ENCODE measurements at regions of chr1 and their contacts with region 1.

Region 1: DNA sequence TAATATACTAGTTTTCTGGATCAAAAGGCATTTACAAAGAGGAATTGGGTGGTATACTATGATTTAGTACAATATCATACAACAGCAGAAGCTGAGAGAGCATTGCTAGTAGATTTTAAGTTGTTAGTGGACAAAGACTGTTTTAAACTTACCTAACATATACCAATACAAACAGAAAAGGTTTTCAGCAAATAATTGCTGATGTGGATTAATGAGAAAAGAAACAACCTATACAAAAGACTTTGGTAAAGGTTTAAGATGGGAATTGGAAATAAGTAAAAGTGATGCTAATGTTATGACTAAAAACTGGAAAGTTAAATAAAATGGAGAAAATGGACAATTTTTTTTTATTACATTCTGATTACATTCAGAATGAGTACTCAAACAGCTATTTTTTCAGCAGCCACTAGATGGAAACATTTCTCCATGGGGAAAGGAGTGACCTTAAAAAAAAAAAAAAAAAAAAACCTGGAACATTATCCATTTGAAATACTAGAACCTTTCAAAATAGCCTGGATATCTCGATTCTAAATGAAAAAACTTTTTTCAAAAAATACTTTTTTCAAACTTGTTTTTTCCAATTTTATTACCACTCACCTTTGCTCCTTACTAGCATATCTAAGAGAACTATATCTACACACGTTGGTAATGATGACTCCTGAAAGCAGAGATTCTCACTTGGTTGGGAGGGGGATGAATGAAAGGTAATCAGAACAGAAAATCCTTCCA is 55.4 kb downstream of the EPRS1 start:
- DNase-seq: no peak
- H3K4me3 Mint-ChIP-seq: no peak overlapping the region
- H3K27ac Mint-ChIP-seq: no peak overlapping the region
- H3K4me1 Mint-ChIP-seq: no peaks in the 10 kb centered on the region
- H3K27me3 Mint-ChIP-seq: no peaks in the 10 kb centered on the region

Region 2: GRCh38 chr1:219959540-219960203 is 31.3 kb before region 1 on chr1:
- CTCF ChIA-PET with region 1: no interaction called
- POLR2A ChIA-PET with region 1: no interaction called
- intact Hi-C with region 1: no loop called
- DNase-seq: no peak
- H3K4me3 Mint-ChIP-seq: no peak overlapping the region
- H3K27ac Mint-ChIP-seq: no peak overlapping the region
- H3K4me1 Mint-ChIP-seq: no peaks in the 10 kb centered on the region
- H3K27me3 Mint-ChIP-seq: no peaks in the 10 kb centered on the region

Region 3: DNA sequence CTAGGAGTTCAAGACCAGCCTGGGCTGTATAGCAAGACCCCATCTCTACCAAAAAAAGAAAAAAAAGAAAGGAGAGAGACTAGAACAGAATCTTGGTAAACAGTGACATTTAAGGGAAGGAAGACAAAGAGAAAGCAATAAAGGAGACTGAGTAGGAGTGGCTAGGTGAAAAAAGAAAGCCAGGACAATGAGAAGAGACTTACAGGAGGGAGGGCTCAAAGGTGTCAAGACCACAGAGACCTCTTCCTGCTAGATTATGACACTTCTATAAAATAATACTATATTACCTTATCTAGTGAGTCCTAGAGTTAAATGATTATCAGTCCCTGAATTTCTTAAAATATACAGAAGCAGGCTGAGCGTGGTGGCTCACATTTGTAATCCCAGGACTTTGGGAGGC is 65.4 kb after region 1 on chr1:
- CTCF ChIA-PET with region 1: no interaction called
- POLR2A ChIA-PET with region 1: no interaction called
- intact Hi-C with region 1: no loop called
- DNase-seq: no peak
- H3K4me3 Mint-ChIP-seq: no peak overlapping the region
- H3K27ac Mint-ChIP-seq: no peak overlapping the region
- H3K4me1 Mint-ChIP-seq: no peaks in the 10 kb centered on the region
- H3K27me3 Mint-ChIP-seq: no peaks in the 10 kb centered on the region

Region 4: DNA sequence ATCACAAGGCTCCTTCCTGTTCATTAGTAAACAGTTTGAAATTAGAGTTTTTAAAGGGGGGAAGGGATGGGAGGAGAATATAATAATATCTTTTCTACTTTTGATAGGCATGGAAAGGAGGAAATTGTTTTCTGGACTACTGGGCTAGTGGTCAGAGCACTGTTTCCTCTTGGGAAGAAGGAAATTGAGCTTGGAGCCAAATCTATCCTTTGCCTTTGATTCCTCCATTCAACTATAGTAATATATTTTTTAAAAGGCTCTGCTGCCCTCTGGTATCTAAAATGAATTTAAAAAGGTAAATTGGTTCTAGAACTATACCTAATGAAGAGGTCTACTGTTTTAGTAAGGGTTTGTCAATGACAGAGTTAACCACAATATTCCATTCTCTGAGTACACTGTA is 108.9 kb after region 1 on chr1:
- CTCF ChIA-PET with region 1: no interaction called
- POLR2A ChIA-PET with region 1: no interaction called
- intact Hi-C with region 1: loop called (anchors 10 kb)
- DNase-seq: no peak
- H3K4me3 Mint-ChIP-seq: no peak overlapping the region
- H3K27ac Mint-ChIP-seq: no peak overlapping the region
- H3K4me1 Mint-ChIP-seq: peaks cover 12% of the 10 kb centered on the region
- H3K27me3 Mint-ChIP-seq: no peaks in the 10 kb centered on the region